ENCODE measurements at regions of chr17 and their contacts with region 1.

Region 1: GRCh38 chr17:44186307-44187130 is at the start of gene TMUB2:
- DNase-seq: peak; percentile 99
- ATAC-seq: peak; percentile 81
- H3K4me3 ChIP-seq: peak within 1 kb of the TSS; percentile 95 to 97 (median 96)
- H3K27ac ChIP-seq: peak within 1 kb of the TSS; percentile 91
- H3K4me1 ChIP-seq: peaks cover 55% of the 10 kb centered on the region
- H3K27me3 ChIP-seq: no peaks in the 10 kb centered on the region; a peak in 1 of 5 replicates
- CTCF ChIP-seq: peak; percentile 16; the same call in 1 of the 2 replicates
- EP300 ChIP-seq: peak in 1 of 2 experiments; percentile 34; a peak in 1 of 4 replicates
- POLR2A ChIP-seq: peak; percentile 95 to 97
- RAD21 ChIP-seq: peak; percentile 9; the same call in 1 of the 2 replicates
- total RNA-seq, gene TMUB2: 18.7 and 26.9 TPM in 2 replicates

Region 2: DNA sequence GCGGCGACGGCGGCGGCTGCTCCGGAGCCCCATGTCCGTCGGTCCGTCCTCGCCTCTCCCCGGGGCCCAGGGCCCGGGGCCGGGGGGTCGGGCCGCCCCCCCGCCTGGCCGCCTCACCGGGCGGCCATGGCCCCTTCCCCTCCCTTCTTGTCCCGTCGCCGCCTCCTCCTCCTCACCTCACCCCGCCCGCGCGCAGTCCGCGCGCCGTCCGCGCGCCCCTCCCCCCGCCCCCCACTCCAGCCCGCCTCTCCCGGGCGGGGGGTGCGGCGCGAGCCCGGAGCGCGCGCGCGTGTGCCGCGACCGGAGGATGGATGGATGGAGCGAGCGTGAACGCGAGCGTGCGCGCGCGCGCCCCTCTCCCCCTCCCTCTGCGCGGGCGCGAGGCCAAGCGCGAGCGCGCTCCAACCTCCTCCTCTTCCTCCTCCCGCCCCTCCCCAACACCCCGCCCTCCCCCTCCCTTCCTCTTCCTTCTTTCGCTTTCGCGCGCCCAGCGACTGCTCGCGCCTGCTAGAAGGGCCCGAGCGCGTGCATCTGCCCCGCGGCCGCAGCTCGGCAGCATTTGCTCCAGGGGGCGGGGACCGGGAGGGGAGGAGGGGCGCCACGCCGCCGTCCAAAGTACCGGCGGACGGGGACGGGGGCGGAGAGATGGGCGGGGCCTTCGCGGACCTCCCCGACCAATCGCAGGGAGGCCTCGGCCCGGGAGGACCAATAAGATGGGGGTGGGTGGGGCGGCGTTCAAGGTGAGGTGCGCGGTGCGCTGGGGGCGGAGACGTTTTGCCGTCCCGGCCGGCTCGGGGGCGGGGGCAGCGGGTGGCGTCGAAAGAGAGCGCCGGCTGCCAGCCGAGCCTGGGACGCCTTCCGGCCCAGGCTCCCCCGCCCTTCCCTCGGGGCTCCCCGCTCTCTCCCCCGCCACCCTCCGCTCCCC is 13.3 kb after region 1 on chr17 and contains the start of gene ATXN7L3:
- CTCF ChIA-PET with region 1: no interaction called
- POLR2A ChIA-PET with region 1: interaction called, 71 read pairs
- in situ Hi-C with region 1: no loop called
- intact Hi-C with region 1: no loop called
- DNase-seq: peak; percentile 97
- ATAC-seq: peak; percentile 82
- H3K4me3 ChIP-seq: peak within 1 kb of the TSS; percentile 91 to 94 (median 91)
- H3K27ac ChIP-seq: peak within 1 kb of the TSS; percentile 95
- H3K4me1 ChIP-seq: peaks cover 39% of the 10 kb centered on the region
- H3K27me3 ChIP-seq: no peaks in the 10 kb centered on the region; a peak in 1 of 5 replicates
- CTCF ChIP-seq: no peak
- EP300 ChIP-seq: no peak; a peak in 1 of 4 replicates
- POLR2A ChIP-seq: peak in 1 of 2 experiments; percentile 65; a peak in 2 of 4 replicates
- RAD21 ChIP-seq: peak; percentile 24; the same call in 1 of the 2 replicates
- total RNA-seq, gene ATXN7L3: 45.7 and 59.1 TPM in 2 replicates

Region 3: GRCh38 chr17:44247440-44247841 is 60.9 kb after region 1 on chr17:
- CTCF ChIA-PET with region 1: no interaction called
- POLR2A ChIA-PET with region 1: no interaction called
- in situ Hi-C with region 1: loop called (anchors 10 kb)
- intact Hi-C with region 1: no loop called
- DNase-seq: no peak
- ATAC-seq: peak; percentile 78
- H3K4me3 ChIP-seq: no peak overlapping the region
- H3K27ac ChIP-seq: no peak overlapping the region
- H3K4me1 ChIP-seq: peaks cover 36% of the 10 kb centered on the region
- H3K27me3 ChIP-seq: peaks cover 2 to 43% of the 10 kb centered on the region in 2 experiments; a peak in 4 of 5 replicates
- CTCF ChIP-seq: no peak
- EP300 ChIP-seq: no peak
- POLR2A ChIP-seq: no peak
- RAD21 ChIP-seq: no peak

Region 4: GRCh38 chr17:44258811-44259351 is 72.4 kb after region 1 on chr17:
- CTCF ChIA-PET with region 1: no interaction called
- POLR2A ChIA-PET with region 1: no interaction called
- in situ Hi-C with region 1: no loop called
- intact Hi-C with region 1: no loop called
- DNase-seq: no peak
- ATAC-seq: peak; percentile 57
- H3K4me3 ChIP-seq: no peak overlapping the region
- H3K27ac ChIP-seq: no peak overlapping the region
- H3K4me1 ChIP-seq: no peaks in the 10 kb centered on the region
- H3K27me3 ChIP-seq: peaks cover 32 to 90% of the 10 kb centered on the region in 2 experiments
- CTCF ChIP-seq: peak; percentile 40
- EP300 ChIP-seq: no peak
- POLR2A ChIP-seq: no peak
- RAD21 ChIP-seq: no peak